ENCODE measurements at regions of chr5 and their contacts with region 1.

Region 1: DNA sequence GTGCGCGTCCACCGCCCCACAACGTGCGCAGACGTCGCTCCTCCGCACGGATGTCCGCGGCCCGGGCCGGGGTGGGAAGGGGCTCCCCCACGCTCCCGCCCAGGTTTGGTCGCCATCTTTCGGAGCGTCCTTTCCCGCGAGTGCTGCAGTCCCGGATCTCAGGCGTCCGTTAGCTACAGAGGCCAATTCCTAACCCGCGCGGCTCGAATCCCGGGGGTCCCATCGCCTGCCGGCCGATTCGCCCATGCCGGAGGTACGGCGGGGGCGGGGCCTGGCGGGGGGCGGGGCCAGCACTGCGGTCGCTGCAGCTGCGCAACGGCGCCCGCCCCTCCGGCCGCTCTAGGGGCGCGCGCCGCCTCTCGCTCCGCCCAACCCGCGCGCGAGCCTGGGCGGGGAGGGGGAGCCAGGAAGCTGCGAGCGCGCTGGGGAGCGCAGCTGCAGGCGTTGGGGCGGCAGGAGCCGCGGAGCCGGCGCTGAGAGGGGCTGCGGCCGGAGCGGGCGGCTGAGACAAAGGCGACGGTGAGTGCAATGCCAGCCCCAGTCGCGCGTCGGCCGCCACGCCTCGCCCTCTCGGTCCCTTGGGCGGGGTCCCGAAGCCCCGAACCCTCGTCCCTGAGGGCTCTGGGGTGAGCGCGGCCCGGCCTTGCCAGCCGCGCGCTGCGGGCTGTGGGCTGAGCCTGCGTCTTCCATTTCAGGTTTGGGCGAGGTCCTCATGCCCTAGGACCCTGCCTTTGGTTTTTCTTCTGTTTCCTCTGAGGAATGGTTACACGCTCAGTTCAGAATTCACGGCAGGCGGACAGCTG is at the start of gene CDC42SE2:
- DNase-seq: no peak
- ATAC-seq: peak; percentile 86
- H3K4me3 ChIP-seq: peak within 1 kb of the TSS; percentile 86
- H3K27ac ChIP-seq: peak within 1 kb of the TSS; percentile 96
- H3K4me1 ChIP-seq: peaks cover 2% of the 10 kb centered on the region
- H3K27me3 ChIP-seq: no peaks in the 10 kb centered on the region
- CTCF ChIP-seq: no peak
- EP300 ChIP-seq: no peak
- POLR2A ChIP-seq: peak; percentile 98
- RAD21 ChIP-seq: 0 out of 2 replicates have a peak, but pooled peaks have one; percentile 14
- polyA plus RNA-seq, gene CDC42SE2: 57.0 to 78.8 TPM

Region 2: DNA sequence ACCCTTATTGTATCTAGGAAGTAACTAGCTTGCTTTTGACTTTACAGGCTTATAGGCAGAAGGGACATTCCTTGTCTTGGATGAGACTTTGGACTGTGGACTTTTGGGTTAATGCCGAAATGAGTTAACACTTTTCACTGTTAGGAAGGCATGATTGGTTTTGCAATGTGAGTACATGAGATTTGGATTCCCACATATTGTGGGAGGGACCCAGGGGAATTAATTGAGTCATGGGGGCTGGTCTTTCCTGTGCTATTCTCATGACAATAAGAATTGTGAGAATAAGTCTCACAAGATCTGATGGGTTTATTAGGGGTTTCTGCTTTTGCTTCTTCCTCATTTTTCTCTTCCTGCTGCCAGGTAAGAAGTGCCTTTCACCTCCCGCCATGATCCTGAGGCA is 516.3 kb before region 1 on chr5:
- CTCF ChIA-PET with region 1: no interaction called
- POLR2A ChIA-PET with region 1: no interaction called
- RAD21 ChIA-PET with region 1: no interaction called
- SMC1A ChIA-PET with region 1: no interaction called
- in situ Hi-C with region 1: no loop called
- intact Hi-C with region 1: no loop called
- DNase-seq: no peak
- ATAC-seq: no peak
- H3K4me3 ChIP-seq: no peak overlapping the region
- H3K27ac ChIP-seq: no peak overlapping the region
- H3K4me1 ChIP-seq: no peaks in the 10 kb centered on the region
- H3K27me3 ChIP-seq: no peaks in the 10 kb centered on the region
- CTCF ChIP-seq: no peak
- EP300 ChIP-seq: no peak
- POLR2A ChIP-seq: no peak
- RAD21 ChIP-seq: no peak

Region 3: GRCh38 chr5:131129306-131129705 is 134.5 kb before region 1 on chr5:
- CTCF ChIA-PET with region 1: no interaction called
- POLR2A ChIA-PET with region 1: no interaction called
- RAD21 ChIA-PET with region 1: no interaction called
- SMC1A ChIA-PET with region 1: no interaction called
- in situ Hi-C with region 1: no loop called
- intact Hi-C with region 1: no loop called
- DNase-seq: no peak
- ATAC-seq: no peak
- H3K4me3 ChIP-seq: no peak overlapping the region
- H3K27ac ChIP-seq: no peak overlapping the region
- H3K4me1 ChIP-seq: no peaks in the 10 kb centered on the region
- H3K27me3 ChIP-seq: no peaks in the 10 kb centered on the region
- CTCF ChIP-seq: no peak
- EP300 ChIP-seq: no peak
- POLR2A ChIP-seq: no peak
- RAD21 ChIP-seq: no peak

Region 4: DNA sequence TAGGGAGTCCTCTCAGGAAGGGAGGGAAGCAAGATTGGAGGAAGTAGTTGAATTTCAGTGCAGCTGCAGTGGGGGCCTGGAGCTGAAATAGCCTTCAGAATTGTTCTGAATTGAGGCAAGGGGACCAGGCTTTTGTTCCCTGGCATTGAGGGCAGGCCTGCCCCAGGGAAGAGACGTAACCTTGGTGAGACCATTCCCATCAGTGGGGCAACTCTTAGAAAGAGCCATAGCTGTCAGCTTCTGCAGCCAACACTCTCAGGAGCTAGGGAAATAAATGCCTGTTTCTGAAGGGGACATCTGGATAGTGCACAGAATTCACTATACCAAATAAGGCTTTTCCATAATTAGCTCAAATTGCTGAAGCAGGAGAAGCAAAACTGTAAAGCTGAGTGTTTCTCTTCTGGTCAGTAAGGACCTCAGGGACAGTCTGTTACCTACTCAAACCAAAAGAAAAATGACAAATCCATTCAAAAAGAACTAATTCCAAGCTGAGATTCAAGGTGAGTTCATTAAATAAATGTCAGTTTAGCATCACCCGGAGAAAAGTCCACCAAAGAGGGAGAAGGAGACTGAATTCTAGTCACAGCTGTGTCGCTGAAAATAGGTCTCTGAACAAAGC is 49.1 kb before region 1 on chr5:
- CTCF ChIA-PET with region 1: interaction called, 65 read pairs
- POLR2A ChIA-PET with region 1: interaction called, 309 read pairs
- RAD21 ChIA-PET with region 1: interaction called, 302 read pairs
- SMC1A ChIA-PET with region 1: interaction called, 1,218 read pairs
- in situ Hi-C with region 1: no loop called
- intact Hi-C with region 1: loop called (anchors 1 kb)
- DNase-seq: no peak
- ATAC-seq: no peak
- H3K4me3 ChIP-seq: peak overlapping the region; percentile 50
- H3K27ac ChIP-seq: peak overlapping the region; percentile 94
- H3K4me1 ChIP-seq: peaks cover 10% of the 10 kb centered on the region; the same call in 1 of the 2 replicates
- H3K27me3 ChIP-seq: no peaks in the 10 kb centered on the region
- CTCF ChIP-seq: no peak
- EP300 ChIP-seq: no peak
- POLR2A ChIP-seq: no peak
- RAD21 ChIP-seq: no peak

Region 5: DNA sequence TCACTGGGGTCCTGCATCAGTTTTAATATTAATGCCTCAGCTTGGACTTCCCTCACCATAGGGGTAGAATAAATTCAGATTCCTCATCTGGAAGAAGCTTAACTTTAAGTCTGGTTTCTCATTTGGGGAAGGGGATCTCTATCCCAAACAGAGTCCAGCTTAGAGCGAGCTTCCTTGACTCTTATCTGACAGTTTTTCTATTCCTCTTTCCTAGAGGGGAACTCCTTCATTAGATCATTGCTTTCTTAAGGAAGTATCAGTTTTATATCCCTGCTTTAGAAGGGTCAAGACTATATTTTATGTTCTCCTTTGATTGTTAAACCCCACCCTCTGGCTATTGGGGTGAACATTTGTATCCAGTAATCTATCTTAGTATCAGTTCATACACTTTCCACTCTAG is 24.2 kb before region 1 on chr5:
- CTCF ChIA-PET with region 1: interaction called, 3 read pairs
- POLR2A ChIA-PET with region 1: interaction called, 4 read pairs
- RAD21 ChIA-PET with region 1: interaction called, 3 read pairs
- SMC1A ChIA-PET with region 1: interaction called, 11 read pairs
- in situ Hi-C with region 1: no loop called
- intact Hi-C with region 1: no loop called
- DNase-seq: no peak
- ATAC-seq: no peak
- H3K4me3 ChIP-seq: no peak overlapping the region
- H3K27ac ChIP-seq: no peak overlapping the region
- H3K4me1 ChIP-seq: no peaks in the 10 kb centered on the region
- H3K27me3 ChIP-seq: no peaks in the 10 kb centered on the region
- CTCF ChIP-seq: no peak
- EP300 ChIP-seq: no peak
- POLR2A ChIP-seq: no peak
- RAD21 ChIP-seq: no peak

Region 6: DNA sequence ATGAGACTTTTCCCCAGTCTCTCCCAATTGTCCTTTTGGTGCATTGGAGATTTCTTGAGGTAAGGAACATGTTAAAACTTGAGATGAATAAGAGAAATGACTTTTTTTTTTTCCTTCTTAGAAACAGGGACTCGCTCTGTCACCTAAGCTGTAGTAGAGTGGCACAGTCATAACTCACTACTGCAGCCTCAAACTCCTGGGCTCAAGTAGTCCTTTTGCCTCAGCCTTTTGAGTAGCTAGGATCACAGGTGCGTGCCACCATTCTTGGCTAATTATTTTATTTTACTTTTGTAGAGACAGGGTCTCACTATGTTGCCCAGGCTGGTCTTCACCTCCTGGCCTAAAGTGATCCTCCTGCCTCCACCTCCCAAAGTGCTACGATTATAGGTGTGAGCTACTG is 25.9 kb after region 1 on chr5:
- CTCF ChIA-PET with region 1: interaction called, 3 read pairs
- POLR2A ChIA-PET with region 1: interaction called, 12 read pairs
- RAD21 ChIA-PET with region 1: interaction called, 22 read pairs
- SMC1A ChIA-PET with region 1: interaction called, 18 read pairs
- in situ Hi-C with region 1: no loop called
- intact Hi-C with region 1: no loop called
- DNase-seq: no peak
- ATAC-seq: peak; percentile 60
- H3K4me3 ChIP-seq: peak overlapping the region; percentile 57; the same call in 1 of the 2 replicates
- H3K27ac ChIP-seq: peak overlapping the region; percentile 82
- H3K4me1 ChIP-seq: peaks cover 33% of the 10 kb centered on the region
- H3K27me3 ChIP-seq: no peaks in the 10 kb centered on the region
- CTCF ChIP-seq: no peak
- EP300 ChIP-seq: no peak
- POLR2A ChIP-seq: no peak
- RAD21 ChIP-seq: no peak

Region 7: DNA sequence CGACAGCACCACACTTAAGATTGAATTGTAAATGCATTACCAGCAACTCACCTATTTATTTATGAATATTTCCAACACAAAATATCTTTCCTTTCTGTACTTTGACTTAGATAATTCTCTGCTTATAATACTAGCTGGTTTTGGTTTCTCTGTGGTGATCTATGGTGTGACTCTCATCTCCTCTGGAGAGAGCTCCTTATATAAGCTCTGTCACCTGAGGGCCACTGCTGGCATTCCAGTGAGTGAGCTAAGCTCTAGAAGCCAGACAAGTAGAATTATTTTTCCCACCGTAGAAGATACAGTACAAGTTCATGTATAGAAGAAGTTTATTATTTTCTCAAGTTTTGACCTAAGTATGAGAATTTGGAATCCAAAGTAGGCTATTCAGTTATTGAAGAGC is 111.5 kb after region 1 on chr5:
- CTCF ChIA-PET with region 1: interaction called, 8 read pairs
- POLR2A ChIA-PET with region 1: interaction called, 28 read pairs
- RAD21 ChIA-PET with region 1: interaction called, 145 read pairs
- SMC1A ChIA-PET with region 1: interaction called, 26 read pairs
- in situ Hi-C with region 1: no loop called
- intact Hi-C with region 1: no loop called
- DNase-seq: no peak
- ATAC-seq: peak; percentile 35
- H3K4me3 ChIP-seq: peak overlapping the region; percentile 37; the same call in 1 of the 2 replicates
- H3K27ac ChIP-seq: peak overlapping the region; percentile 88
- H3K4me1 ChIP-seq: peaks cover 77% of the 10 kb centered on the region
- H3K27me3 ChIP-seq: no peaks in the 10 kb centered on the region
- CTCF ChIP-seq: no peak
- EP300 ChIP-seq: no peak
- POLR2A ChIP-seq: no peak
- RAD21 ChIP-seq: no peak

Region 8: GRCh38 chr5:131417240-131417869 is 153.5 kb after region 1 on chr5:
- CTCF ChIA-PET with region 1: interaction called, 6 read pairs
- POLR2A ChIA-PET with region 1: interaction called, 6 read pairs
- RAD21 ChIA-PET with region 1: interaction called, 11 read pairs
- SMC1A ChIA-PET with region 1: interaction called, 6 read pairs
- in situ Hi-C with region 1: no loop called
- intact Hi-C with region 1: loop called (anchors 2 kb)
- DNase-seq: peak; percentile 34
- ATAC-seq: peak; percentile 65
- H3K4me3 ChIP-seq: no peak overlapping the region
- H3K27ac ChIP-seq: no peak overlapping the region
- H3K4me1 ChIP-seq: peaks cover 18% of the 10 kb centered on the region
- H3K27me3 ChIP-seq: no peaks in the 10 kb centered on the region
- CTCF ChIP-seq: peak; percentile 65 to 77 (median 75)
- EP300 ChIP-seq: no peak
- POLR2A ChIP-seq: no peak
- RAD21 ChIP-seq: peak; percentile 82

Region 9: GRCh38 chr5:131548176-131548575 is 284.3 kb after region 1 on chr5:
- CTCF ChIA-PET with region 1: no interaction called
- POLR2A ChIA-PET with region 1: no interaction called
- RAD21 ChIA-PET with region 1: no interaction called
- SMC1A ChIA-PET with region 1: no interaction called
- in situ Hi-C with region 1: no loop called
- intact Hi-C with region 1: no loop called
- DNase-seq: no peak
- ATAC-seq: no peak
- H3K4me3 ChIP-seq: no peak overlapping the region
- H3K27ac ChIP-seq: no peak overlapping the region
- H3K4me1 ChIP-seq: no peaks in the 10 kb centered on the region
- H3K27me3 ChIP-seq: no peaks in the 10 kb centered on the region
- CTCF ChIP-seq: no peak
- EP300 ChIP-seq: no peak
- POLR2A ChIP-seq: no peak
- RAD21 ChIP-seq: no peak

Measured in GM12878 (cell line).